Activated naive CD4-positive, alpha-beta T cell treated with anti-CD3 and anti-CD28 coated beads for 36 hours (primary cell): ENCODE measurements at regions of chr2 and their contacts with region 1.

Region 1: DNA sequence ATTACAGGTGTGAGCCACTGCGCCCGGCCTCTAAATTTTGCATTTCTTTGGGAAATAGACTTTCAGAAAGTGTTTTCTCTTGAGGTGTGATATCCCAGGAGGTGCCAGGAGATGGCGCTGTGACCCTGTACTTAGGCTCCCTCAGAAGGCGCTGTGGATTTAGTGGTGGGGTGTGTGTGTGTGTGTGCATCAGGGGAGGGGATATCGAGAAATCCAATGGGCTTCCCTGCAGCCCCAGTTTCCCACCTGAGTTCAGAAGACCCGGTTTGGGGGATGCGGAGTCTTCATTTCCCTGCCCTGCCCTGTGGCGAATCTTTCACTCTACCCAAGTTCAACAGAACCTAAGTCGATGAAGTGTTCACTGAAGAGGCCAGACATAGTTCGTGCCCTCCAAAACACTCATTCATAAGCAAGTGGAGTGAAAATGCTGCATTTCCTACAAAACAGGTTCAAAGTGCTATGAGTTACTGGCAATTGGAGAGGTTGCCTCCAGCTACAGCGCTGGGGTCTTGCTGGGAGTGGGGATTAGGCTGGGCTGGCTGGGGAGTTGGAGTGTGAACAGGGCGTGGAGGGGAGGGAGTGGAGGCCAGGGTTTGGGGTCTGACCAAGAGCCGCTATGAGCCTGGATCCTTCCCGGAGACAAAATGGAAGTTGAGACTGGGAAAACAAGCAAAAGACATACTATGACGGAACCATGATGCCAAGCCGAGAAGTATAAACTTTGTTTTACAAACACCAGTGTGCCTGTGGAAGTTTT is 6.5 kb upstream of the WNT6 start:
- DNase-seq: peak; percentile 80
- H3K4me3 Mint-ChIP-seq: no peak overlapping the region
- H3K27ac Mint-ChIP-seq: no peak overlapping the region
- H3K4me1 Mint-ChIP-seq: no peaks in the 10 kb centered on the region
- H3K27me3 Mint-ChIP-seq: peaks cover 39% of the 10 kb centered on the region

Region 2: GRCh38 chr2:218659258-218659987 is 193.7 kb before region 1 on chr2 and contains the starts of genes BCS1L and ZNF142:
- CTCF ChIA-PET with region 1: interaction called, 32 read pairs
- intact Hi-C with region 1: no loop called
- DNase-seq: peak; percentile 98
- H3K4me3 Mint-ChIP-seq: peak within 1 kb of the TSS; percentile 90
- H3K27ac Mint-ChIP-seq: peak within 1 kb of the TSS; percentile 81
- H3K4me1 Mint-ChIP-seq: peaks cover 40% of the 10 kb centered on the region
- H3K27me3 Mint-ChIP-seq: no peaks in the 10 kb centered on the region
- total RNA-seq, gene BCS1L: 61.3 to 63.6 TPM
- total RNA-seq, gene ZNF142: 28.0 to 28.4 TPM

Region 3: GRCh38 chr2:218727502-218728165 is 125.5 kb before region 1 on chr2:
- CTCF ChIA-PET with region 1: interaction called, 46 read pairs
- intact Hi-C with region 1: no loop called
- DNase-seq: peak; percentile 15
- H3K4me3 Mint-ChIP-seq: no peak overlapping the region
- H3K27ac Mint-ChIP-seq: no peak overlapping the region
- H3K4me1 Mint-ChIP-seq: peaks cover 14% of the 10 kb centered on the region
- H3K27me3 Mint-ChIP-seq: no peaks in the 10 kb centered on the region

Region 4: DNA sequence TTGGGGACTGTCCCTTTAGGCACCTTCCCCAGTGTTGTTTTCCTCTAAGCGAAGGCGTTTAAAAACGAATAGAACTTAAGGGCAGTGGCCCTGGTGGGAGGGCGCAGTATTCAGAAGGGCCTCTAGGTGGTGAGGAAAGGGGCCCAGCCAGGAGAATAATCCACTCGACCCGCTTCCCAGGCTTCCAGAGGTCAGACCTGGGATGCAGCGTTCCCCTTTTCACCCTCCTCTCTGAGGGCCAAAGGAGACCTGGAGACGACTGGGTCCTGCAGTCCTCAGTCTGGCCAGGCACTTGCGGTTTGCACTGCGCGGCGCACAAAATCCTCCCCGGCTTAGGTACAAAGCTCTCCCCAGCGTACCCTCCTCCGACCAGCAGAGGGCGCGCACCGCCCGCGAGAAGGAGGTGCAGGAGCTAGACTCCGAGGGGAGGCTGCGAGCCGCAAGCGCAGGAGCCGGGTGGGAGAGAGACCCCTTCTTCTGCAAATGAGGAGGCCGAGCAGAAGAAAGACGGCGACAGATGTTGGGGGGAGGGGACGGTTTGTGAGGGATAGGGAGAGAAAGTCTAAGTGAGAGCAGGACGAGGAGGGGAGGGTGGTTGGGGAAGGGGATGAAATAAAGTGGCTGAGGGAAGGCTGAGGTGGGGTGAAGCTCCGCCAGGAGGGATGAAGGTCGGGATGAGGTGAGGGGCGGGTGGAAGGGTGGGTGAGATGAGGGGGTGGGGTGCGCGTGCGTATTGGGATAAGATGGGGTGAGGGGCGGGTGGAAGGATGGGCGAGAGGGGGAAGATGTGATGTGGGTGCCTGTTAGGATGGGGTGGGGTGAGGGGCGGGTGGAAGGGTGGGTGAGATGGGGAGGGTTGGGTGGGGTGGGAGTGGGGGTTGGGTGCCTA is 127.0 kb after region 1 on chr2:
- CTCF ChIA-PET with region 1: interaction called, 4 read pairs
- intact Hi-C with region 1: loop called (anchors 2 kb)
- DNase-seq: peak; percentile 90
- H3K4me3 Mint-ChIP-seq: peak overlapping the region; percentile 56
- H3K27ac Mint-ChIP-seq: no peak overlapping the region
- H3K4me1 Mint-ChIP-seq: peaks cover 27% of the 10 kb centered on the region
- H3K27me3 Mint-ChIP-seq: peaks cover 58% of the 10 kb centered on the region

Region 5: DNA sequence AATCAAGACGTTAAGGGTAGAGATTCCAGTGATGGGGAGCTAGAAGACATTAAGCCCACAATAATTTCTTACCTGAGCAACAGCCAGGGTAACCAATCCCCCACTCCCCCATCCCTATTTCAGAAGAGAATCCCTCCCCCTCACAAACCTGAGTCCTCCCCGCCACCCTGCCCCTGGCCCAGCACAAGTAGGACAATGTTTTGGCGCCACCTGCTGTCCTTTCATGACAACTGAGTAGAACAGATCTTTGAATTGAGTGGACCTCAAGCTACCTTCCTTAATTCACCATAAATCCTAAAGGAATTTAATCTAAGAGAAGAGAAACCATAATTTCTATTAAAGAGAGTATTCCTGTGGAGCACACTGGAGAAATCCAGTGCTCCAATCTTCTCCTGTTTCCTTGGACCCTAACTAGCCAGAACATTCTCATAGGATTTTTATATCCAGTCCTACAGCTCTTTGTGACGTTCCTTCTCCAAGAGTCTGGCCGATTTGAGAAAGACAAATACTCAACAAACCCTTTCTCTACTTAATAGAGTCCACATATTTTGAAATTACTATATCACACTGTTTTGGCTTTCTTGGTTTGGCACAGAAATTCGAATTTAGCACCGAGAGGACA is 266.4 kb after region 1 on chr2:
- CTCF ChIA-PET with region 1: no interaction called
- intact Hi-C with region 1: loop called (anchors 10 kb)
- DNase-seq: peak; percentile 78
- H3K4me3 Mint-ChIP-seq: no peak overlapping the region
- H3K27ac Mint-ChIP-seq: no peak overlapping the region
- H3K4me1 Mint-ChIP-seq: peaks cover 4% of the 10 kb centered on the region
- H3K27me3 Mint-ChIP-seq: no peaks in the 10 kb centered on the region